Heart right ventricle (tissue), 16 donors: ENCODE measurements at regions of chr16 and their contacts with region 1.

Region 1: DNA sequence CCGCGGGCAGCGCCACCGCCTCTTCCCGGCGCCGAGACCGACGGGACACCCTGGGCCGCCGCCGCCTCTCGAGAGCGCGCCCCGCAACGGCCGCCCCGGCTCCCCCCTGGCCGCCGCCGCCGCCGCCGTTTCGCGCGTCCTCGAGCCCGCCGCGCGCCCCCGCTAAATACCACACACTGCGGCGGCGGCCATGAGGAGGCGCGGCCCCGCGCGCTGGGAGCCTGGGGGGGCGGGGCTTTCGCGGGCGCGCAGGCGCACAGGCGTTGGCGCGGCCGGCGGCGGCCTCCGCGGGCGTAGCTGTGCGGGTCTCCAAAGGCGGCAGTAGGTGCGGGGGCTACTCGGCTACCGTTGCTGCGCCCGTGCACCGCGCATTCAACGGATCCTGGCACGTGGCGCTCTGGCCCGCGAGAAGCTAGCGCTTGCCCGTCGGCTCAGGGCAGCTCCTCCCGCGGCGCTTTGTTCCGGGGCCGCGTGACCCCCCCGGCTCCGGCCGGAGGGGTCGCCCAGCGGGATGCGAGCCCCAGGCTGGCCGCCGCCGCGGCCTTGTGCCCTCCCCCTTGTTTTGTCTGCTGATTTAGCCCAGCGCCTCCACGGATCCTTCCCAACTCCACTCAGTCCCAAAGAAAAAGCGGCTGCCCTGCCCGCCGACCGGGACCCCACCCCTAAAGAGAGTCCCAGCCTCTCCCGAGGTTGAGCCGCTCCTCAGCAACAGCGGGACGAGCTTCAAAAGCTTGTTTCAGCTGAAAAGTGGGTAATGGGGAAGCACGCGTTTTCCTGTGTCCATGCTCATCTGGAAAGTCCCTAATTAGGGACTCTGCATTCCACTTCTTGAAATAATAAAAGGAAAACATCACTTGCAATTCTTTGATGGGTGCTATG is at the start of gene SIAH1:
- DNase-seq: peak; percentile 85 to 90
- ATAC-seq: peak; percentile 86 to 95 (median 94)
- H3K4me3 ChIP-seq: peak within 1 kb of the TSS; percentile 77 to 100 (median 95)
- H3K27ac ChIP-seq: peak within 1 kb of the TSS; percentile 96 to 100 (median 99)
- H3K4me1 ChIP-seq: peaks cover 4 to 46% (median 36%) of the 10 kb centered on the region in 9 donors
- H3K27me3 ChIP-seq: no peaks in the 10 kb centered on the region
- CTCF ChIP-seq: peak in 2 of 9 donors; percentile 7
- total RNA-seq, gene SIAH1: 12.2 to 17.2 (median 14.5) TPM

Region 2: GRCh38 chr16:48244080-48244862 is 141.2 kb before region 1 on chr16 and contains the start of gene LONP2:
- intact Hi-C with region 1: loop called in 1 of 10 experiments (anchors 10 kb)
- DNase-seq: peak; percentile 93
- ATAC-seq: peak; percentile 99 to 100 (median 100)
- H3K4me3 ChIP-seq: peak within 1 kb of the TSS; percentile 63 to 98 (median 84)
- H3K27ac ChIP-seq: peak within 1 kb of the TSS; percentile 28 to 95 (median 86)
- H3K4me1 ChIP-seq: peaks cover 3 to 51% (median 34%) of the 10 kb centered on the region in 9 donors
- H3K27me3 ChIP-seq: no peaks in the 10 kb centered on the region
- CTCF ChIP-seq: no peak
- total RNA-seq, gene LONP2: 66.2 to 86.6 (median 75.4) TPM

Region 3: DNA sequence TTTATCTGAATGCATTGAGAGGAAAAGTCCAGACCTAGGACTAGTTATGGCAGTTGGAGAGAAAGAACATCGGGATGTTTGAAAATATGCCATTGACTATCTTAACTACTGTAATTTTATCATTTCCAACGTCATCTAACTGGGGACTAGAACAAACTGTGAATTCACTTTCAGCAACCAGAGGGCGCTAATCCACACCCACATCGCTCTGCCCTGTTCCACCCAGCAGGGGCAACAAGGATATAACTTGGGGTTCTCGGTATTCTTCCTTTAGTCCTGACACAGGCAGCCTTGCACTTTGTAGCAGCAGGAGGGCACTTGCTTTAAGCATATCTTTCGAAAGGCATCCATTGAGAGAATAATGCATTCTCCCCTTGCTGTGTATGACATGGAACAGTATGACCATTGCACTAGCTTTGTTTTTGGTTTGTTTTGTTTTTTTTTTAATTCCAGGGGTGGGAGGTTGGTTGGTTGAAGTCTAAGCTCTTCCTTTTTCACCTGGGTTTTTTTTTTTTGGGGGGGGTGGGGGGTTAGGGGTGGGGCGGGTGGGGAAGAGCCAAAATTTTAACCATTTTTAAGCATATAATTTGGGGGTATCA is 31.8 kb before region 1 on chr16:
- intact Hi-C with region 1: no loop called
- DNase-seq: peak in 1 of 2 donors; percentile 61
- ATAC-seq: peak; percentile 73 to 87 (median 85)
- H3K4me3 ChIP-seq: no peak overlapping the region
- H3K27ac ChIP-seq: no peak overlapping the region
- H3K4me1 ChIP-seq: peaks cover 0 to 30% (median 9%) of the 10 kb centered on the region in 9 donors
- H3K27me3 ChIP-seq: no peaks in the 10 kb centered on the region
- CTCF ChIP-seq: peak; percentile 72 to 91 (median 87)

Region 4: GRCh38 chr16:48365581-48366164 is 19.8 kb before region 1 on chr16:
- intact Hi-C with region 1: loop called in 3 of 10 experiments (anchors 2 kb)
- DNase-seq: peak; percentile 91
- ATAC-seq: peak; percentile 98 to 100 (median 99)
- H3K4me3 ChIP-seq: peak overlapping the region; percentile 29 to 71 (median 63)
- H3K27ac ChIP-seq: peak overlapping the region; percentile 5 to 88 (median 79)
- H3K4me1 ChIP-seq: peaks cover 7 to 71% (median 49%) of the 10 kb centered on the region in 9 donors
- H3K27me3 ChIP-seq: no peaks in the 10 kb centered on the region
- CTCF ChIP-seq: peak in 4 of 9 donors; percentile 7 to 34 (median 26)

Region 5: GRCh38 chr16:48434653-48435317 is 49.3 kb after region 1 on chr16:
- intact Hi-C with region 1: loop called in 1 of 10 experiments (anchors 5 kb)
- DNase-seq: no peak
- ATAC-seq: peak in 5 of 8 donors; percentile 21 to 65 (median 58)
- H3K4me3 ChIP-seq: no peak overlapping the region
- H3K27ac ChIP-seq: peak overlapping the region in 2 of 10 donors; percentile 4 to 73
- H3K4me1 ChIP-seq: peaks cover 0 to 41% (median 0%) of the 10 kb centered on the region in 9 donors
- H3K27me3 ChIP-seq: no peaks in the 10 kb centered on the region
- CTCF ChIP-seq: no peak

Region 6: GRCh38 chr16:48535831-48536613 is 150.5 kb after region 1 on chr16:
- intact Hi-C with region 1: loop called in 3 of 10 experiments (anchors 5 to 10 kb)
- DNase-seq: peak; percentile 50 to 75
- ATAC-seq: peak; percentile 30 to 70 (median 52)
- H3K4me3 ChIP-seq: no peak overlapping the region
- H3K27ac ChIP-seq: peak overlapping the region; percentile 52 to 85 (median 73)
- H3K4me1 ChIP-seq: peaks cover 26 to 58% (median 41%) of the 10 kb centered on the region in 9 donors
- H3K27me3 ChIP-seq: no peaks in the 10 kb centered on the region
- CTCF ChIP-seq: no peak

Region 7: DNA sequence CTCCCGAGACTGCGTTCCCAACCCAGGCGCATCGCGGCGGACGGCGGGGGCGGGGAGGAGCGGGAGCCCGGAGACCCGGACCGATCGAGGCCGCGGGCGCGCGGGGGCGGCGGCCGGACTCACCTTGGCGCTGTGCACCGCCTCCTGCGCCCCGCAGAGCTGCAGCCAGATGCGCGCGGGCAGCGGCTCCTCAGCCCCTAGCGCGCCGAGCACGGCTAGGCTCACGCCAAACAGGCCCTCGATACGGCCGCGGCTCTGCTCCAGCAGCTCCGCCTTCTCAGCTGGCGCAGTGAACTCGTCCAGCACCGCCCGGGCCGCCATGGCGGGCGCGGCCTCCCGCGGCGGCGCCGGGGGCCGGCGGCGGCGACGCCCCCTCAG is 224.1 kb after region 1 on chr16:
- intact Hi-C with region 1: loop called in 3 of 10 experiments (anchors 5 to 10 kb)
- DNase-seq: peak; percentile 55 to 78
- ATAC-seq: peak; percentile 47 to 83 (median 63)
- H3K4me3 ChIP-seq: peak overlapping the region; percentile 92 to 99 (median 98)
- H3K27ac ChIP-seq: peak overlapping the region; percentile 83 to 97 (median 92)
- H3K4me1 ChIP-seq: peaks cover 13 to 82% (median 69%) of the 10 kb centered on the region in 9 donors
- H3K27me3 ChIP-seq: no peaks in the 10 kb centered on the region
- CTCF ChIP-seq: no peak

Region 8: GRCh38 chr16:48617711-48618148 is 232.2 kb after region 1 on chr16:
- intact Hi-C with region 1: loop called in 4 of 10 experiments (anchors 5 to 10 kb)
- DNase-seq: peak; percentile 45 to 84
- ATAC-seq: peak; percentile 61 to 86 (median 79)
- H3K4me3 ChIP-seq: peak overlapping the region in 6 of 10 donors; percentile 5 to 41 (median 28)
- H3K27ac ChIP-seq: peak overlapping the region; percentile 5 to 83 (median 62)
- H3K4me1 ChIP-seq: peaks cover 4 to 69% (median 59%) of the 10 kb centered on the region in 9 donors
- H3K27me3 ChIP-seq: no peaks in the 10 kb centered on the region
- CTCF ChIP-seq: no peak